ENCODE measurements at regions of chr2 and their contacts with region 1.

Region 1: DNA sequence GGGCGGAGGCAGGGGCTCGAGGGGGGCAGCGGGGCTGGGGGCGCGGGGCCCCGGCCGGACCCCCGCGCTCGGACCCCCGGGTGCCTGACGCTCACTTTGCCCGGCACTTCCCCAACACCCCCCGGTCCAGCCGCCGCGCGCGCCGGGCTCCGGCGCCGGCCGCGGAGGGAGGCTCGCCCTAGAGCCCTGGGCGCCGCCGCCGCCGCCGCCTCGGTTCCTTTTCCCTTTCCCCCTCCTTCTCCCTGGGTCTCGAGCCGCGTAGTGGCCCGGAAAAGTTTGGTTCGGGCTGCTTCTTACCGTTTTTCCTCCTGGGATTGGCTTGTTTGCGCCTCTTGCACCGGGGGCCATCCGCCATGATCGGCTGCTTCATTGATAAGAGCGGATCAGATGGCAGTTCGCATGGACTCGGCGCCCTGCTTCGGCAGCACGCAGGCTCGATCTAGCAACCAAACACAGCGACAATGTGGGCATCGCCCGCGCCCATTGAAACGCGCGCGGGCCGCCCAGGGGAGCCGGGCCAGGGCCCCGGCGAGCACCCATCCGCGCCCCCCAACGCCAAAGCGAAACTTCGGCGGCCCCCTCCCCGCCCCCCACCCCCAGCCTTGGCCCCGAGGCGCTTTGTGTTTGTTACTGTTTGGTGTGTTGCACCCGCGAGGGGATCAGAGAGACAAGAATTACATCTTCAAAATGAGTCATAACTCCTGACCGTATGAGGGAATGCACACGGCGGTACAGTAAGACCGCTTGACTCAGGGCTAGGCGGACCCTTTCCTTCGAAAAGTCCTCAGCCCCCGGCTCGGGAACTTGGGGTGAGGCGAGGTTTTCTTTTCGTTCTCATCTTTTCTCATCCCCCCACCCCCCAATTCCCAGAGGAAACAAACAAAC is 2.7 kb downstream of the ZEB2 start:
- DNase-seq: no peak
- H3K4me3 ChIP-seq: peak overlapping the region; percentile 70 to 84
- H3K27ac ChIP-seq: peak overlapping the region; percentile 99
- H3K4me1 ChIP-seq: peaks cover 7% of the 10 kb centered on the region
- H3K27me3 ChIP-seq: no peaks in the 10 kb centered on the region
- CTCF ChIP-seq: no peak
- POLR2A ChIP-seq: no peak

Region 2: GRCh38 chr2:143442193-143442592 is 1075.0 kb before region 1 on chr2:
- intact Hi-C with region 1: loop called (anchors 5 kb)
- DNase-seq: no peak
- H3K4me3 ChIP-seq: no peak overlapping the region
- H3K27ac ChIP-seq: no peak overlapping the region
- H3K4me1 ChIP-seq: no peaks in the 10 kb centered on the region
- H3K27me3 ChIP-seq: no peaks in the 10 kb centered on the region
- CTCF ChIP-seq: no peak
- POLR2A ChIP-seq: no peak

Region 3: DNA sequence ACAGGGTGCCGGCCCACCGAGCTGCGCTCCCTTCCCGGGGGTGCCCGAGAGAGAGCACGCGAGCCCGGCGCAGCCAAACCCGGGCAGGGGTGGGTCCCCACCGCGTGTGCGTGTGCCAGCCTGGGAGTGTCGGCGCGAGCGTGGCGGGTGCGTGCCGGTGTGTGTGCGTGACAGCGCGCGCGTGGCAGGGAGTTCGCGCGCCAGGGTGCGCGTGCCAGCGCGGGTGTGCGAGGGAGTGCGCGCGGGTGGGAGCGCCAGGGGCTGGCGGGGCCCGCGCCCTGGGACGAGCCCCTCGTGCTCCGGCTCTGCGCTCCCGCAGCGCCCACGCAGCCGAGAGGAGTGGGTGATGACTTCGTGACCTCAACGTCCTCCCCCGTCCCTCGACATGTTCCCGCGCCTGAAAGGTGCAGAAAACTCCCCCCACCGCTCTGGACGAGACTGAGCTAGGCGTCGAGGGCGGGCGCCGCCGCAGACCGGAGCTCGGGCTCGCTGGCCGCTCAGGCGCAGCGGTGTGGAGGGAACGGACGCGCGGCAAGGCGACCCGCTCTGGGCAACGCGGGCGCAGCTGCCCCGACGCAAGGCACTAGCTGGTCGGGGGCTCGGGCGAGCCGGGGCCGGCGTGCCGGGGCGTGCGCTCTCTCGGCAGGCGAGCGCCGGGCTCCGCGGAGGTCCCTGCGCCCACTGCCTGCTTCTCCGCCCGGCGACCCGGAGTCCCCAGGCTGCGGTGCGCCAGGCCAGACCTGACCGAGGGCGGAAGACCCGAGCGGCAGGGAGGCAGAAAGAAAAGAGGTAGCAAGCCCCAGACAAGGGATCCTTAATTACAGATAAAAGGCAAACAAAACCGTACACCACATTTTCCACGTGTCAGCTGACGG is 580.1 kb before region 1 on chr2:
- intact Hi-C with region 1: loop called (anchors 5 kb)
- DNase-seq: no peak
- H3K4me3 ChIP-seq: peak overlapping the region; percentile 51 to 66
- H3K27ac ChIP-seq: peak overlapping the region; percentile 90
- H3K4me1 ChIP-seq: peaks cover 19% of the 10 kb centered on the region
- H3K27me3 ChIP-seq: no peaks in the 10 kb centered on the region
- CTCF ChIP-seq: no peak
- POLR2A ChIP-seq: no peak

Region 4: GRCh38 chr2:144452169-144452988 is 64.8 kb before region 1 on chr2:
- intact Hi-C with region 1: loop called (anchors 5 kb)
- DNase-seq: no peak
- H3K4me3 ChIP-seq: peak overlapping the region; percentile 21 to 30
- H3K27ac ChIP-seq: peak overlapping the region; percentile 53
- H3K4me1 ChIP-seq: peaks cover 96% of the 10 kb centered on the region
- H3K27me3 ChIP-seq: no peaks in the 10 kb centered on the region
- CTCF ChIP-seq: peak in 1 of 3 experiments; percentile 16
- POLR2A ChIP-seq: no peak

Region 5: GRCh38 chr2:145752091-145752806 is 1235.0 kb after region 1 on chr2:
- intact Hi-C with region 1: loop called (anchors 5 kb)
- DNase-seq: no peak
- H3K4me3 ChIP-seq: no peak overlapping the region
- H3K27ac ChIP-seq: peak overlapping the region; percentile 55
- H3K4me1 ChIP-seq: peaks cover 20% of the 10 kb centered on the region
- H3K27me3 ChIP-seq: no peaks in the 10 kb centered on the region
- CTCF ChIP-seq: peak in 2 of 3 experiments; percentile 44 to 66
- POLR2A ChIP-seq: no peak